ENCODE measurements at regions of chr7 and their contacts with region 1.

Region 1: DNA sequence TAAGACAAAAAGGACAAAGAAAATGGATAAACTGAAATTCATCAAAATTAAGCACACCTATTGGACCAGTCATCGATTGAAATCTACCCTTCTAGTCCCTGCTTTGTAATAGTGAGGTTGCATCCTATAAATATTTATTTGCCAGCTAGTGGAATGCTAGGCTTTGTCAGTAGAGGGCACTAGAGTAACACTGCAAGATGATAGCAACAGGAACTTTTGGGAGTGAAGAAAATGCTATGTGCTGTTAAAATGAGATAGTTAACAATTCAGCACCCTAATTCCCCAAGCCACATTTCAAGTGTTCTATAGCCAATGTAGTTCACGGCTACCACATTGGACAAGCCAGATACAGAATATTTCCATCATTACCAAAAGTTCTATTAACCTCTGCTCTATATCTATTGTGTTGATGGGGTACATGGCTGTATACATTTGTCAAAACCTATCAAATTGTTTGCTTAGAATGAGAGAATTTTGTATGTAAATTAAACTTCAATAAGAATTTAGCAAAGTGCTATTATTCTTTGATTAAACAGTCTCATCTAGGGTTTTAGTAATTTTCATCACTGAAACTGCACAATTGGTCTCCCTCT is 69.8 kb downstream of the LSMEM1 start:
- DNase-seq: peak; percentile 69
- H3K4me3 ChIP-seq: no peak overlapping the region
- H3K27ac ChIP-seq: no peak overlapping the region
- H3K4me1 ChIP-seq: no peaks in the 10 kb centered on the region
- H3K27me3 ChIP-seq: peaks cover 4 to 5% of the 10 kb centered on the region in 2 experiments
- CTCF ChIP-seq: peak; percentile 65 to 80
- POLR2A ChIP-seq: no peak

Region 2: GRCh38 chr7:112869111-112869757 is 318.7 kb after region 1 on chr7:
- CTCF ChIA-PET with region 1: interaction called, 27 read pairs
- POLR2A ChIA-PET with region 1: no interaction called
- dilution Hi-C with region 1: no loop called
- intact Hi-C with region 1: loop called (anchors 1 kb)
- DNase-seq: peak; percentile 51
- H3K4me3 ChIP-seq: no peak overlapping the region
- H3K27ac ChIP-seq: no peak overlapping the region
- H3K4me1 ChIP-seq: no peaks in the 10 kb centered on the region
- H3K27me3 ChIP-seq: no peaks in the 10 kb centered on the region
- CTCF ChIP-seq: peak; percentile 90 to 93
- POLR2A ChIP-seq: no peak

Region 3: GRCh38 chr7:112898432-112899290 is 348.1 kb after region 1 on chr7:
- CTCF ChIA-PET with region 1: interaction called, 97 read pairs
- POLR2A ChIA-PET with region 1: no interaction called
- dilution Hi-C with region 1: no loop called
- intact Hi-C with region 1: loop called (anchors 1 kb)
- DNase-seq: peak; percentile 78
- H3K4me3 ChIP-seq: no peak overlapping the region
- H3K27ac ChIP-seq: no peak overlapping the region
- H3K4me1 ChIP-seq: no peaks in the 10 kb centered on the region
- H3K27me3 ChIP-seq: no peaks in the 10 kb centered on the region
- CTCF ChIP-seq: peak; percentile 65 to 74
- POLR2A ChIP-seq: no peak

Region 4: DNA sequence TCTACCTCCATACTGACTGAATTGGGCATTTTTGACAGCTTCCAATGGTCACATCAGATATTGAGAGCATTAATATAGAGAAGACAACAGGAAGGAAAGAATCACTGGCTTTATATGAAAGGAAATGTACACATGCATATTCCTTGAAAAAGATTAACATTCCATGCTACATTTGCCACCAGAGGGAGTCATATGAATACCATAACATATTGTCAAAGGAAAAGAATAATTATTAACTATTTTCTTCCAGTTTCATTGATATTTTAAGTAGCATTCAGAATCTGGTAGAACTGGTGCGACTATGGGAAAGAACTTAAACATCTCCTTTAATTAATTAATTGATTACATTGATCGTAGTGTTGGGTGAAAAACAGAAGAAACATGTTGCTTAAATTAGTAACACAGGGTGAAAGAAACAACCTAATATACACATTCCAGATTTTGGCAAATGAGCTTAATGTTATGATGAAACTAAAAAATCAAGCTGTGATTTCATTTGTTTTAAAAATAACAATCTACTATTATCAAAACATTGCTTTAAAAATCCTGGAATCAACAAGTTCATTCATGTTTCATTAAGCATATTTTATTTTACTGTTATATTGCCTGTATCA is 464.6 kb after region 1 on chr7:
- CTCF ChIA-PET with region 1: interaction called, 10 read pairs
- POLR2A ChIA-PET with region 1: no interaction called
- dilution Hi-C with region 1: no loop called
- intact Hi-C with region 1: no loop called
- DNase-seq: peak; percentile 34
- H3K4me3 ChIP-seq: no peak overlapping the region
- H3K27ac ChIP-seq: no peak overlapping the region
- H3K4me1 ChIP-seq: no peaks in the 10 kb centered on the region
- H3K27me3 ChIP-seq: no peaks in the 10 kb centered on the region
- CTCF ChIP-seq: peak in 1 of 2 donors; percentile 7
- POLR2A ChIP-seq: no peak

Region 5: GRCh38 chr7:113421696-113422330 is 871.2 kb after region 1 on chr7:
- CTCF ChIA-PET with region 1: interaction called, 72 read pairs
- POLR2A ChIA-PET with region 1: interaction called, 3 read pairs
- dilution Hi-C with region 1: no loop called
- intact Hi-C with region 1: loop called (anchors 1 kb)
- DNase-seq: peak; percentile 74
- H3K4me3 ChIP-seq: no peak overlapping the region
- H3K27ac ChIP-seq: no peak overlapping the region
- H3K4me1 ChIP-seq: no peaks in the 10 kb centered on the region
- H3K27me3 ChIP-seq: no peaks in the 10 kb centered on the region
- CTCF ChIP-seq: peak; percentile 72 to 84
- POLR2A ChIP-seq: no peak

Region 6: DNA sequence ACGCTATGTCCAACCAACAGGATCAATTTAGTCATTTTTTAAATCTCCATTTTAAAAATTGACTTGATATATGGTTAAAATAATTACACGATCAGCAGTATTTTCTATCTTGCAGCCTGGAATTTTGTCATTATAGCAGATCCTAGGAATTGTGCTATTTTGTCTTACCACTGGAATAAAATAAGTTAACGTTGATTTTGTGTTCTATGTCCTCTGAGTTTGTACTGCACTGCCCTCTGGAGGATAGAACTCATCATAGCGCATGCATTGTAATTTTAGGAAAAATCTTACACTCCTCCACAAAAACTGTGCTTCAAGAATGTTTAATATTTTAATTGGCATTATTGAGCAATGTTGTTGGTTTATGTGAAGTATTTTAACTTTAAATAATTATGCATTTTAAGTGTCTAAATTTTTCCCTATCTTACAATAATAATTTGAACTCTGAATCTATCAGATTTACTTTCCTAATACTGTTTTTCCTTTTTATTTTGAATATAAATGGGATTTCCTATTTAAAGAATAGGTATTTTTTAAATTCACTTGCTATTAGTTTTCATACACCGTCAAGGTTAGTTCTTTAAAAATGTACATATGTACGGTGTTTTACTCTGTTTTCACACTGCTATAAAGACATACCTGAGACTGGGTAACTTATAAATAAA is 1148.1 kb after region 1 on chr7:
- CTCF ChIA-PET with region 1: interaction called, 6 read pairs
- POLR2A ChIA-PET with region 1: no interaction called
- dilution Hi-C with region 1: no loop called
- intact Hi-C with region 1: loop called (anchors 2 kb)
- DNase-seq: peak; percentile 44
- H3K4me3 ChIP-seq: no peak overlapping the region
- H3K27ac ChIP-seq: no peak overlapping the region
- H3K4me1 ChIP-seq: no peaks in the 10 kb centered on the region
- H3K27me3 ChIP-seq: no peaks in the 10 kb centered on the region
- CTCF ChIP-seq: peak; percentile 45 to 48
- POLR2A ChIP-seq: no peak

Region 7: GRCh38 chr7:113710310-113711106 is 1159.9 kb after region 1 on chr7:
- CTCF ChIA-PET with region 1: interaction called, 7 read pairs
- POLR2A ChIA-PET with region 1: no interaction called
- dilution Hi-C with region 1: no loop called
- intact Hi-C with region 1: loop called (anchors 2 kb)
- DNase-seq: peak; percentile 84
- H3K4me3 ChIP-seq: no peak overlapping the region
- H3K27ac ChIP-seq: no peak overlapping the region
- H3K4me1 ChIP-seq: no peaks in the 10 kb centered on the region
- H3K27me3 ChIP-seq: peaks cover 2 to 7% of the 10 kb centered on the region in 2 experiments
- CTCF ChIP-seq: peak; percentile 79 to 86
- POLR2A ChIP-seq: no peak